ENCODE measurements at regions of chr2 and their contacts with region 1.

Region 1: DNA sequence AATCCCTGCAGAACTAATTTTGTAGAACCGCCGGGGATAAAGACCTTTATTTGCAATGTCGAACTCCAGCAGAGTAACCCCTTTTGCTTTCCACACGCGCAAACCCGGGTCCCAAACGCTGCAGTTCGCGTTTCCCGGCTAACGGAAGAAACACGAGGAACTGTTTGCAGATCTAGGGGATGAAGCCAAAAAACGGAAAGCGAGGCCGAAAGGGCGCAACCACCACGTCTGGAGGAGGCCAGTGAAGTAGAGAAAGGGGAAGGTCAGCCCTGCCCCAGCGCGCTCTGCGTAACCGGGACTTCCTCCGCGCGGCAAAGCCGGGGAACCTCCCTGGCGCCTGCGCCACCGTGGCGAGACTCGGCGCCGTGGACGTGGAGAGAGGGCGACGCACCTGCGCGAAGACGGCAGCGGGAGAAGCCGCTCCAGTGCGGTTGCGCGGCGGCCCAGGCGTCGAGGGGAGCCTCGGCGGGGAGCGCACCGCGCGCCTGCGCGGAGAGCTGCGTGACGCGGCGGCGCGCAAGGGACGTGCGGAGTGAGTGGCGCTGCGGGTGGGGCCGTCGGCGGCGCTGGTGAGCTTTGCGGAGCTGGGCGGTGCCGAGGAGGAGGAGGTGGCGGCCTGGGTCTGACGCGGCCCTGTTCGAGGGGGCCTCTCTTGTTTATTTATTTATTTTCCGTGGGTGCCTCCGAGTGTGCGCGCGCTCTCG is at the start of gene PPP1CB:
- DNase-seq: peak; percentile 96
- ATAC-seq: peak; percentile 86
- H3K4me3 Mint-ChIP-seq: peak within 1 kb of the TSS; percentile 95
- H3K27ac Mint-ChIP-seq: peak within 1 kb of the TSS; percentile 98
- H3K4me1 Mint-ChIP-seq: peaks cover 54% of the 10 kb centered on the region
- H3K27me3 Mint-ChIP-seq: no peaks in the 10 kb centered on the region
- CTCF ChIP-seq: no peak
- total RNA-seq, gene PPP1CB: 130 and 135 TPM in 2 replicates

Region 2: GRCh38 chr2:27890146-27890923 is 861.1 kb before region 1 on chr2 and contains the starts of genes BABAM2 and RBKS:
- CTCF ChIA-PET with region 1: no interaction called
- POLR2A ChIA-PET with region 1: no interaction called
- intact Hi-C with region 1: loop called (anchors 2 kb)
- DNase-seq: peak; percentile 93
- ATAC-seq: peak; percentile 78
- H3K4me3 Mint-ChIP-seq: peak within 1 kb of the TSS; percentile 99
- H3K27ac Mint-ChIP-seq: peak within 1 kb of the TSS; percentile 99
- H3K4me1 Mint-ChIP-seq: peaks cover 74% of the 10 kb centered on the region
- H3K27me3 Mint-ChIP-seq: peaks cover 2% of the 10 kb centered on the region
- CTCF ChIP-seq: no peak
- total RNA-seq, gene BABAM2: 51.9 and 55.6 TPM in 2 replicates
- total RNA-seq, gene RBKS: 2.5 and 3.1 TPM in 2 replicates

Region 3: DNA sequence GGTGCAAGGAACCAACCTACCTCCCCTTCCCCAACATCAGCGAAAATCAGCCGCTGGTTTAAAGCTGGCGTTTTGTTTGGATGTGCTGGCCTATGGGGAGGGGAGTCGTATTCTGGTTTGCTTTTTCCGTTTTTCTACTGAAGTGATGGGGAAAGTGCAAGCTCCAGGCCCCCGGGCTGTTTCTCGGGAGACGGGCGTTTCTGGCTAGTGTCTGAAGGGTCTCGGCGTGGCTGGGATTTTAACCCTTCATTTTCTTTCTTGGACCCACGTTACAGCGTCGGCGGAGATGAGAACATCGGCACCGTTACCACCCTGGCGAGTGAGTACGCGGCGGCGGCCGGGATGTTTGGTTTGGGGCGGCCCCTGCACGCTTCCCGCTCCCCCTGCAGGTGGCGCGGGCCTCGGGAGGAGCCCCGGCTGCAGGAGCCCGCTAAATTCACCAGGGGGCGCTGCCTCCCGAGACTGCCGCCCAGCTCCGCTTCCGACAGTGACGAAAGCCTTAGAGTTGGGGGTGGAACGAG is 184.8 kb before region 1 on chr2:
- CTCF ChIA-PET with region 1: interaction called, 3 read pairs
- POLR2A ChIA-PET with region 1: interaction called, 8 read pairs
- intact Hi-C with region 1: loop called (anchors 1 kb)
- DNase-seq: peak; percentile 85
- ATAC-seq: peak; percentile 99
- H3K4me3 Mint-ChIP-seq: peak overlapping the region; percentile 93
- H3K27ac Mint-ChIP-seq: peak overlapping the region; percentile 76
- H3K4me1 Mint-ChIP-seq: peaks cover 12% of the 10 kb centered on the region
- H3K27me3 Mint-ChIP-seq: peaks cover 8% of the 10 kb centered on the region
- CTCF ChIP-seq: peak; percentile 23

Region 4: DNA sequence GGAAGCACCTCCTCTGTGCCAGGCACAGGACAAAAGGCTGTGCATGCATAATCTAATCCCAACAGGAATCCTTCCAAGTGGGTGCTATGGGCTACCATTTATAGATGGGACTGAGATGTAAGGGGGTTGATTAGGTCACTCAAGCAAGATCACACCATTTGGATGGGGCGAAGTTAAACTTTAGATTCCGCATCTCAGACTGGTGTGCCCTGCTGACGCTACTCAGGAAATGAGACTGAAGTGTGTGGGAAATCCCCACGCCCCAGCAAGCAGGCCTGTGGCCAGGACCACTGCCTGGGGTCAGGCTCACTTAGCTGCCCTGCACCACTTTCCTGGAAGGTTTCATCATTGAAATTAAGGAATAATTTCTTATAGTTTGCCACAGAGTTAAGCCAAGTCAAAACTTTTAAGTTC is 70.2 kb before region 1 on chr2:
- CTCF ChIA-PET with region 1: no interaction called
- POLR2A ChIA-PET with region 1: no interaction called
- intact Hi-C with region 1: loop called (anchors 1 kb)
- DNase-seq: peak; percentile 25
- ATAC-seq: peak; percentile 95
- H3K4me3 Mint-ChIP-seq: no peak overlapping the region
- H3K27ac Mint-ChIP-seq: peak overlapping the region; percentile 5
- H3K4me1 Mint-ChIP-seq: peaks cover 14% of the 10 kb centered on the region
- H3K27me3 Mint-ChIP-seq: no peaks in the 10 kb centered on the region
- CTCF ChIP-seq: no peak

Region 5: DNA sequence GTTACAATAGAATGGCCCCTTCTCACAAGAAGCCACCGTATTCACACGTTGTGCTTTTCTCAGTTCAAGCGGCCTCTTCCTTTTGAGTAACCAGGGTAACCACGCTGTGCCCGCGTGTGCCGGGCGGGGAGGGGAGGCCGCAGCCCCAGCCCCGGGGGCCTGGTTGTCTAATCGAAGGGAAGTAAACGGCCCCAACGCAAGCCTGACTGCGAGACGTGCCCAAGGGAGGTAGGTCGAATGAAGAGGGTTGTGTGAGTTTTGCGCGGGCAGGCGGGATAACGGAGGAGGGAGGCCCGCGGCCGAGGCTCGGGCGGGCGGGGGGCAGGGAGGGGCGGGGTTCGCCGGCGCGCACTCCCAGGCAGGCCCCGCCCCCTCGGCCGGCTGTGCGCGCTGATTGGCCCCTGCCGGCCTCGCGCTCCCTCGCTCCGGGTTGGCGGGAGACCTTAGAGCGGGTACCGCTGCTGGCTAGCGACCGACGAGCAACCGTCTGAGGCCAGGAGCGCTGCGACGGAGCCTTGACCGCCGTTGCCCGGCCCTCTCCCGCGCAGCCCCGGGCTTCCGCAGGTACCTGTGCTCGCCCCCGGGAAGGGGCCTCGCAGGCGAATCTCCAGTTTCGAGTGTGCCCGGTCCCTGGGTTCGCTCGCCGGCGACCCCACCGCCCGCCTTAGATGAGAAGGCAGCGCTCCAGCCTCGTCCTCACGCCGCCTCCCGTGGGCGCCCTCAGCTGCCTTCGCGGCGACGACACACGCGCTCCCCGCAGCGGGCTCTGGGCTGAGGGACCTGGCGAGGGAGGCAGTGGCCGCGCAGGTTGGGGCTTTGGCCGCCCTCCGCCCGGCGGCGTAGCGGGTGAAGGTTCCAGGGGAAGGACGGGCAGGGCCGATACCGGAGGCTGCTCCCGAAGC is 59.2 kb after region 1 on chr2 and contains the start of gene SPDYA:
- CTCF ChIA-PET with region 1: no interaction called
- POLR2A ChIA-PET with region 1: interaction called, 6 read pairs
- intact Hi-C with region 1: loop called (anchors 2 kb)
- DNase-seq: peak; percentile 71
- ATAC-seq: peak; percentile 96
- H3K4me3 Mint-ChIP-seq: peak within 1 kb of the TSS; percentile 84
- H3K27ac Mint-ChIP-seq: peak within 1 kb of the TSS; percentile 50
- H3K4me1 Mint-ChIP-seq: peaks cover 6% of the 10 kb centered on the region
- H3K27me3 Mint-ChIP-seq: no peaks in the 10 kb centered on the region
- CTCF ChIP-seq: no peak
- total RNA-seq, gene SPDYA: 1.6 and 2.1 TPM in 2 replicates

Region 6: GRCh38 chr2:28842042-28842441 is 90.6 kb after region 1 on chr2:
- CTCF ChIA-PET with region 1: no interaction called
- POLR2A ChIA-PET with region 1: no interaction called
- intact Hi-C with region 1: no loop called
- DNase-seq: no peak
- ATAC-seq: no peak
- H3K4me3 Mint-ChIP-seq: no peak overlapping the region
- H3K27ac Mint-ChIP-seq: no peak overlapping the region
- H3K4me1 Mint-ChIP-seq: no peaks in the 10 kb centered on the region
- H3K27me3 Mint-ChIP-seq: no peaks in the 10 kb centered on the region
- CTCF ChIP-seq: no peak

Region 7: GRCh38 chr2:28894470-28895177 is 143.2 kb after region 1 on chr2 and contains the start of gene WDR43:
- CTCF ChIA-PET with region 1: no interaction called
- POLR2A ChIA-PET with region 1: interaction called, 17 read pairs
- intact Hi-C with region 1: loop called (anchors 1 kb)
- DNase-seq: peak; percentile 99
- ATAC-seq: peak; percentile 99
- H3K4me3 Mint-ChIP-seq: peak within 1 kb of the TSS; percentile 99
- H3K27ac Mint-ChIP-seq: peak within 1 kb of the TSS; percentile 87
- H3K4me1 Mint-ChIP-seq: peaks cover 44% of the 10 kb centered on the region
- H3K27me3 Mint-ChIP-seq: no peaks in the 10 kb centered on the region
- CTCF ChIP-seq: no peak
- total RNA-seq, gene WDR43: 86.6 and 98.8 TPM in 2 replicates